Lower leg skin (tissue), 4 donors: ENCODE measurements at regions of chrX and their contacts with region 1.

Region 1: GRCh38 chrX:32443841-32444240 is 767.5 kb downstream of the DMD start:
- DNase-seq: no peak
- H3K4me3 ChIP-seq: no peak overlapping the region
- CTCF ChIP-seq: no peak
- POLR2A ChIP-seq: no peak

Region 2: GRCh38 chrX:31658360-31658759 is 785.5 kb before region 1 on chrX:
- intact Hi-C with region 1: no loop called
- DNase-seq: no peak
- H3K4me3 ChIP-seq: no peak overlapping the region
- CTCF ChIP-seq: no peak
- POLR2A ChIP-seq: no peak

Region 3: DNA sequence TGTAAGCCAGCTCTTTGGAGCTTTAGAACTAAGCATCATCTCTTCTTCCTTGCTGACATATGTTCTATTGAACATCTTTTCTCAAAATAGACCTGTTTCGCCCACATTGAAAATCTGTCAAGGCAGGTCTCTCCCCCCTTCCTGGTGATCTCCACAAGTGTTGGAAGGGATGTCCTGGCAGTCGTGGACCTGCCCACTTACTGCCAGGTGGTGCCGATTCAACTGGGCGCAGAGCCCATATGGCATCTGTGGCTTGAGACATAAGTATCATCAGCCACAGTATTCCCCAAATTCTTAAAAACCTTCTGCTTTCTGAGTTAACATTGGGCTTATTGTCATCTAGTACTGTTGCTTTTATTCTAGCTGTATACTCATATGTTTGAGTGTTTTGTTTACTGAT is 402.7 kb before region 1 on chrX:
- intact Hi-C with region 1: no loop called
- DNase-seq: no peak
- H3K4me3 ChIP-seq: no peak overlapping the region
- CTCF ChIP-seq: no peak
- POLR2A ChIP-seq: no peak

Region 4: DNA sequence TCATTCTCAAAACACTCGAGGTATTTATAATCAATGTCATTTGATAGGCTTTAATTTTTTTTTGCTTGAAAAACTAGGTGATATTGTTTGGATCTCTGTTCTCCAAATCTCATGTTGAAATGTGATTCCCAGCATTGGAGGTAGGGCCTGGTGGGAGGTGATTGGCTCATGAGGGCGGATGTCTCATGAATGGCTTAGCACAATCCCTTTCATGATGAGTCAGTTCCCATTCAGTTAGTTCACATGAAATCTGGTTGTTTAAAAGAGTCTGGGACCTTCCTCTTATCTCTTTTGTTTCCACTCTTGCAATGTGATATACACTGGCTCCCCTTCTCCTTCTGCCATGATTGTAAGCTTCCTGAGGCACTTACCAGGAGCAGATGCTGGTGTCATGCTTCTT is 128.8 kb after region 1 on chrX:
- intact Hi-C with region 1: no loop called
- DNase-seq: no peak
- H3K4me3 ChIP-seq: no peak overlapping the region
- CTCF ChIP-seq: no peak
- POLR2A ChIP-seq: no peak

Region 5: GRCh38 chrX:33592398-33592797 is 1148.6 kb after region 1 on chrX:
- intact Hi-C with region 1: loop called (anchors 5 kb)
- DNase-seq: no peak
- H3K4me3 ChIP-seq: no peak overlapping the region
- CTCF ChIP-seq: no peak
- POLR2A ChIP-seq: no peak